ENCODE measurements at regions of chr10 and their contacts with region 1.

Region 1: DNA sequence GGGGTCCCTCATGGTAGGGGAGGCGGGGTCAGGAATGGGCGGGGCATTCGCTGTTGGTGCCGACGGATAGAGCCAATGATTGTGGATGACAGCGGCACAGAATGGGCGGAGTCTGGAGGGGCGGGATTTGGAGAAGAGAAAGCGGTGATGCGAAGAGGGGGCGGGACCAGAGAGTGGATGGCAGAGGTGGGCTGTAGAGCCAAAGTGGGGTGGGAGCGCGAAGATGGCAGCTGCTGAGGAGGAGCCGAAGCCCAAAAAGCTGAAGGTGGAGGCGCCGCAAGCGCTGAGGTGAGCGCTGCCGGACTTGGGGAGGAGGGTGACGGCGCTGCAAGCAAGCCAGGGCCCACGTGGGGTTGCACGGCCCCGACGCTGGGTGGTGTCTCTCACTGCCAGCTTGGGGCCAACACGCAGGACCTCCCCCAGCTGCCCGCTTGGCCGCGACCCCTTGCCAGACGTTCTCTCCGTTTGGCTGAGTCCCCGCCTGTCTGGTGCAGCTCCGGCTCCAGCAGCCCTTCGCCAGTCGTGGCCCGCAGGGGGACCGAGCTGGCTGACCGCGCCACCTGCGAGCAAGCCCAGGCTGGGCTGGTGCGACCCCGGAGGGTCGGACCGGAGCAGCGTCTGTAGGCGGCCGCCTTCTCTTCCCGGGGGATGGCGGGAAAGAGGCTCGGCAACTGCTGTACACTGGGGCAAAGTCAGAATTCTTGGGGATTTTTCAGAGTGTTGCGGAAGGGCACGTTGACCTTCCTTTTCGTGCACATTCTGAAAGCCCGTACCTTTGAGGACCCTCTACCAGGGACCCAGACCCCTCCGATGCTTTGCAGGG is at the start of gene ADK:
- DNase-seq: peak; percentile 100
- H3K4me3 Mint-ChIP-seq: no peak within 1 kb of the TSS
- H3K27ac Mint-ChIP-seq: peak within 1 kb of the TSS; percentile 33
- H3K4me1 Mint-ChIP-seq: peaks cover 31% of the 10 kb centered on the region
- H3K27me3 Mint-ChIP-seq: no peaks in the 10 kb centered on the region
- total RNA-seq, gene ADK: 43.4 to 43.9 TPM

Region 2: DNA sequence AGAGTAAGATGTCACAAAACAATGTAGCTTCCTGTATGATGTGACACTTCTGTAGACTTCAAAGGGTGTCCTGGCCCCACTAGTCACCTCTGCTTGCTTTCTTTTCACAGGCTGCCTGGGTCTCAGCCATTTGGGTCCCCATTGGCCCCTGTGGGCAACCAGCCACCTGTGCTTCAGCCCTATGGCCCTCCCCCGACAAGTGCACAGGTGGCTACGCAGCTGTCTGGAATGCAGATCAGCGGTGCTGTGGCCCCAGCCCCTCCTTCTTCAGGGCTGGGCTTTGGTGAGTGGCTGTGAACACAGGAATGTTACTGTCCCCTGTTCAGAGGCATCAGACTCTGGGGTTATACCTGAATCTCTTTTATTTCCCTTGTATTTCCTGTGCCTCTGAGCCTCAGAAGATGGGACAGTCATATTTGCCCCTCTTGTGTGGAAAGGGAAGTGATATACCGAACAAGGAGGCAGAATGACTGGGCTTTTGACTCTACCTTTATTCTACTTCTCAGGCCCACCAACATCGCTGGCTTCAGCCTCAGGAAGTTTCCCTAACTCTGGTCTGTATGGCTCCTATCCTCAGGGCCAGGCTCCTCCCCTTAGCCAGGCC is 391.7 kb before region 1 on chr10:
- CTCF ChIA-PET with region 1: no interaction called
- intact Hi-C with region 1: no loop called
- DNase-seq: peak; percentile 73
- H3K4me3 Mint-ChIP-seq: no peak overlapping the region
- H3K27ac Mint-ChIP-seq: peak overlapping the region; percentile 82
- H3K4me1 Mint-ChIP-seq: peaks cover 57% of the 10 kb centered on the region
- H3K27me3 Mint-ChIP-seq: no peaks in the 10 kb centered on the region

Region 3: DNA sequence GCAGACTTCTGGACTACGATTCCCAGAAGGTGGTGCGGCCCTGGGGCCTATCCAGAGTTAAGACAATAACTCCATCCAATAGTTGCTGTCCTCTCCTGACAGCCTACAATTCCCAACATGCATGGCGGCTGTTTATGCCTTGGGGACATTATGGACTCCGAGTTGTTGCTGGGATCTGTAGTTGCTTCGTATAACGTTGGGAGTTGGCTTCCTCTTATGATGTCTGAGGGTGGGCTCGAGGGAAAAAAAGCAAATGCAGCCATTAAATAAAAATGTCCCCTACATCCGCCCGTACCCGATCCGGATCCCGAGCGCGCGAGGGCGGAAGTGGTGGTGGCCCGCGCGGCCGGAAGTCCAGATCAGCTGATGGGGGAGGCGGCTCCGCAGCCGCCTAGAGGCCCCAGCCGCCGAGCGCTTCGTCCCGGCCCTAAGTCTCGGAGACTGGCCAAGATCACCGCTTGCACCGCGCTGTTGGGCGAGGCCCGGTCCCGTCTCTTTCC is 366.0 kb before region 1 on chr10 and contains the start of gene ZSWIM8:
- CTCF ChIA-PET with region 1: no interaction called
- intact Hi-C with region 1: loop called (anchors 1 kb)
- DNase-seq: peak; percentile 89
- H3K4me3 Mint-ChIP-seq: peak within 1 kb of the TSS; percentile 98
- H3K27ac Mint-ChIP-seq: peak within 1 kb of the TSS; percentile 97
- H3K4me1 Mint-ChIP-seq: peaks cover 42% of the 10 kb centered on the region
- H3K27me3 Mint-ChIP-seq: no peaks in the 10 kb centered on the region
- total RNA-seq, gene ZSWIM8: 25.8 to 26.7 TPM

Region 4: GRCh38 chr10:73965890-73966768 is 185.1 kb before region 1 on chr10:
- CTCF ChIA-PET with region 1: no interaction called
- intact Hi-C with region 1: no loop called
- DNase-seq: no peak
- H3K4me3 Mint-ChIP-seq: no peak overlapping the region
- H3K27ac Mint-ChIP-seq: no peak overlapping the region
- H3K4me1 Mint-ChIP-seq: no peaks in the 10 kb centered on the region
- H3K27me3 Mint-ChIP-seq: no peaks in the 10 kb centered on the region

Region 5: GRCh38 chr10:74176380-74177139 is 25.3 kb after region 1 on chr10:
- CTCF ChIA-PET with region 1: no interaction called
- intact Hi-C with region 1: loop called (anchors 1 kb)
- DNase-seq: peak; percentile 96
- H3K4me3 Mint-ChIP-seq: peak overlapping the region; percentile 90
- H3K27ac Mint-ChIP-seq: peak overlapping the region; percentile 93
- H3K4me1 Mint-ChIP-seq: peaks cover 32% of the 10 kb centered on the region
- H3K27me3 Mint-ChIP-seq: no peaks in the 10 kb centered on the region

Region 6: DNA sequence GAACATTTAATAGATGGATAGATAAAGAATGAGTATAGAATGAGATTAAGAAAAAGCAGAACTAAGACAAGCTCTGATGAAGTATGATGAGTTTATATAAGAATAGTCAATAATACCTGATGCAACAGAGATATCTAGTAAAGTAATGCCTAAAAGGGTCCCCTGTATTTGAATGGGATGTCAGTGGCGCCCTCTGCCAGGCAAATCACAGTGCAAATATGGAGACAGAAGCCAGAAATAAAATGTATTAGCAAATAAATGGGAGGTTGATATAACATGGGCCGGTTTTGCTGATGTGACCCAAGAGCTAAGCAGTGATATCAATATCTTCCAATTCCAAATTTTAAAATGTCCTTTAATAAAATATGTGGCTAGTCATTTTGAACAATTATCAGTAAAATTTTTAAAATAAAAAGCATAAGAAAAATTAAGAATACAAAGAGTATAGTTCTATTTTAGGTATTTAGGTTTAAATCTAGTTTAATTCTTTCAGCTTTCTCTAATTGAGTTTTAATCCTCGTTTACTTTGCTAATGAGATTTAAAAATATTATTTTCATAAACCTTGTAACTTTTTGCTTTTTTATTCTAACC is 62.4 kb after region 1 on chr10:
- CTCF ChIA-PET with region 1: no interaction called
- intact Hi-C with region 1: loop called (anchors 1 kb)
- DNase-seq: peak; percentile 71
- H3K4me3 Mint-ChIP-seq: no peak overlapping the region
- H3K27ac Mint-ChIP-seq: no peak overlapping the region
- H3K4me1 Mint-ChIP-seq: peaks cover 3% of the 10 kb centered on the region
- H3K27me3 Mint-ChIP-seq: no peaks in the 10 kb centered on the region

Region 7: GRCh38 chr10:75210282-75211006 is 1059.2 kb after region 1 on chr10 and contains the start of gene VDAC2:
- CTCF ChIA-PET with region 1: no interaction called
- intact Hi-C with region 1: loop called (anchors 1 kb)
- DNase-seq: peak; percentile 92
- H3K4me3 Mint-ChIP-seq: peak within 1 kb of the TSS; percentile 100
- H3K27ac Mint-ChIP-seq: peak within 1 kb of the TSS; percentile 99
- H3K4me1 Mint-ChIP-seq: peaks cover 42% of the 10 kb centered on the region
- H3K27me3 Mint-ChIP-seq: no peaks in the 10 kb centered on the region
- total RNA-seq, gene VDAC2: 193 TPM

Measured in activated naive CD4-positive, alpha-beta T cell treated with anti-CD3 and anti-CD28 coated beads for 36 hours (primary cell).